ENCODE measurements at regions of chr3 and their contacts with region 1.

Region 1: DNA sequence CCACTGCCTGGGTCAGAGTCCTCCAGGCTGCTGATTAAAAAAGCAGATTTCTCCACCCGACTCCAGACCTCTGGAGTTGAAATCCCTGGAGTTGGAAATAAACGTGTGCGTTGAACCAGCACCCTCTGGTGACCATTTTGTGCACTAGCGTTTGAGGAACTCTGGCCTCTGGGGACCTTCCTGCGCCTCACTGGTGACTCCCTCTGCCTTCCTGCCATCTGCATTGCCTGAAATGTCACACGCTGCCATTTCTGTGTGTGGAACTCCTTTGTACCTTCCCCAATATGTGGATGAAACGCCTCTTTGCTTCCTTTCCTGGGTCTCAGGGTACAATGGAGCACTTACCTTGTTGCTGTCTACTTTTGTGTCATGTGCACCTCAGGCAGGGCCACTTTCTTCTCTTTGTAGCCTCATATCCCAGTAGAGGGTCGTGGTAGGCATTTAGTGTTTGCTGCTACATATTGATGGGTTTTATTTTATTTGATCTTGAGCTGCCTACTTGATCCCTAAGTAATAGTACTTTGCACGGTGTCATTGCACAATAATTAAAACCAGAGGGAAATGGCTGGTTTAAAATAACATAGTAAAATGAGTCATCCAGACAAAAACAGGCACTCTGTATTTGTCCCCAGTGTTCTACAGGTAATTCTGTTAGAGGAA is 56.8 kb downstream of the GPR171 start:
- DNase-seq: peak; percentile 43 to 74 (median 52)
- ATAC-seq: peak; percentile 97
- H3K4me3 ChIP-seq: no peak overlapping the region
- H3K27ac ChIP-seq: no peak overlapping the region
- H3K4me1 ChIP-seq: no peaks in the 10 kb centered on the region
- H3K27me3 ChIP-seq: peaks cover 11 to 14% of the 10 kb centered on the region in 2 experiments; a peak in 4 of 5 replicates
- CTCF ChIP-seq: peak; percentile 85 to 90 (median 89)
- EP300 ChIP-seq: no peak
- POLR2A ChIP-seq: no peak
- RAD21 ChIP-seq: peak; percentile 85 to 91

Region 2: DNA sequence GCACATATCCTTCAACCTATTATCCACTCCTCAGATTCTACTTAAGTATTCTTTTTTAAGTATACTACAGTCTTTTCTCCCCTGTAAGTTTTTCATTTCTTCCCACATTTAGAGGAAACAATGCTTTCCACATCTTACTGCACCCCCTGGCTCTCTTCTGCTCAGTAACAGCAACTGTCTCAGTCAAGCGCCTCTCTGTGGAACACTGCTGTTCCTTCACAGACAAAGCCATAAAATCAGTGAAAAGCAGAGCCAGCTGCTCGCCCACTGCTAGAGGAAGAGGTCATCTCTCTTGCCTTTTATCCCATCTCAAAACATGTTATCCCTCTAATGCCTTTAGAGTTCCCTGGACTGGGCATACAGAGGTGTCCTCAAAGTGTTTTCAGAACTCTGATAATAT is 624.7 kb before region 1 on chr3:
- CTCF ChIA-PET with region 1: no interaction called
- POLR2A ChIA-PET with region 1: no interaction called
- in situ Hi-C with region 1: loop called (anchors 25 kb)
- intact Hi-C with region 1: loop called (anchors 5 kb)
- DNase-seq: peak in 1 of 4 experiments; percentile 16
- ATAC-seq: peak; percentile 82
- H3K4me3 ChIP-seq: no peak overlapping the region
- H3K27ac ChIP-seq: no peak overlapping the region
- H3K4me1 ChIP-seq: peaks cover 0 to 4% of the 10 kb centered on the region in 2 experiments; a peak in 1 of 5 replicates
- H3K27me3 ChIP-seq: no peaks in the 10 kb centered on the region
- CTCF ChIP-seq: peak in 2 of 3 experiments; percentile 28 to 63; a peak in 4 of 6 replicates
- EP300 ChIP-seq: no peak
- POLR2A ChIP-seq: no peak
- RAD21 ChIP-seq: peak in 1 of 2 experiments; percentile 36; a peak in 1 of 4 replicates

Region 3: DNA sequence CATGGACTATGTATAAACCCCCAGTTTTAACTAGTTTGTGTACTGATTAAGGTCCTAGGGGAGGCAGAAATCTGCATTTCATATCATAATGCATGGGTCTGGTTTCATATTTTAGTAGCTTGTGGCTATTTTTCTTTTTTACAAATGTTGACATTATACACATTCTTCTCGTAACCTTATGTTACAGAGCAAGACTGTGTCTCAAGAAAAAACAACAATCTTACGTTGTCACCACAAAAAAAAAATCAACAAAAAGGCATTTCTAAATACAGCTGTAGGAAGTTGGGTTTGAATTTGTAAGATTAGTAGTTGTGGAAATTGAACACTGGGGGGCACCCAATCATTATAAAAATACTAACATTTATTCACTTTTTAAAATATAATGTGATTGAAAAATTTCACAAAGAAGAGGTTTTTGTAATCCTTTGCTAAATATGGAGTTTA is 617.8 kb before region 1 on chr3:
- CTCF ChIA-PET with region 1: interaction called, 5 read pairs
- POLR2A ChIA-PET with region 1: no interaction called
- in situ Hi-C with region 1: loop called (anchors 25 kb)
- intact Hi-C with region 1: loop called (anchors 5 kb)
- DNase-seq: peak in 2 of 4 experiments; percentile 22 to 28
- ATAC-seq: peak; percentile 69
- H3K4me3 ChIP-seq: no peak overlapping the region
- H3K27ac ChIP-seq: no peak overlapping the region
- H3K4me1 ChIP-seq: no peaks in the 10 kb centered on the region
- H3K27me3 ChIP-seq: no peaks in the 10 kb centered on the region
- CTCF ChIP-seq: peak in 2 of 3 experiments; percentile 19 to 57; a peak in 3 of 6 replicates
- EP300 ChIP-seq: no peak
- POLR2A ChIP-seq: no peak
- RAD21 ChIP-seq: peak; percentile 39 to 62; a peak in 3 of 4 replicates

Region 4: GRCh38 chr3:150925751-150926201 is 220.4 kb before region 1 on chr3:
- CTCF ChIA-PET with region 1: interaction called, 3 read pairs
- POLR2A ChIA-PET with region 1: no interaction called
- in situ Hi-C with region 1: no loop called
- intact Hi-C with region 1: loop called (anchors 1 kb)
- DNase-seq: peak; percentile 64 to 76 (median 72)
- ATAC-seq: peak; percentile 97
- H3K4me3 ChIP-seq: no peak overlapping the region
- H3K27ac ChIP-seq: no peak overlapping the region
- H3K4me1 ChIP-seq: peaks cover 0 to 3% of the 10 kb centered on the region in 2 experiments; a peak in 1 of 5 replicates
- H3K27me3 ChIP-seq: peaks cover 0 to 27% of the 10 kb centered on the region in 2 experiments; a peak in 3 of 5 replicates
- CTCF ChIP-seq: peak; percentile 73 to 87 (median 79)
- EP300 ChIP-seq: no peak
- POLR2A ChIP-seq: no peak
- RAD21 ChIP-seq: peak; percentile 68 to 79

Region 5: DNA sequence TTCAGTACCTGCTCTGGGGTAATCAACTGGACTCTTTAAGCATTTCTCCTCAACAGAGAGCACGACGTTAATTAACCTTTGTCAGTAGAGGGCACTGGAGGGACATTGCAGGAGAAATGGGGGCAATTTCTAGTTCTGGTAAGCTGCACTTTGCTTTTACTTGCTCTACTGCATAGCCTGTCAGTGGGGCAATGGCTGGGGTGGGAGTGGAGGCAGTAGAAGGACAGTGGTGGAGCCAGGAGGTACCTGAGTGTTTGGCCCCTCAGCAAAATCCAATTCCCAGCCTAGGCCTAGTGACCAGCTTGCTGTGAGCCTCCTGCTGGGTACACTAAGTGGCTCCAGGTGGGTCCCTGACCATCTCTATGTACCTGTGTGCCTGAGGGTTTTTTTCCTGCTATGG is 79.0 kb before region 1 on chr3:
- CTCF ChIA-PET with region 1: no interaction called
- POLR2A ChIA-PET with region 1: interaction called, 3 read pairs
- in situ Hi-C with region 1: no loop called
- intact Hi-C with region 1: loop called (anchors 1 kb)
- DNase-seq: peak in 1 of 4 experiments; percentile 24
- ATAC-seq: peak; percentile 77
- H3K4me3 ChIP-seq: no peak overlapping the region
- H3K27ac ChIP-seq: no peak overlapping the region
- H3K4me1 ChIP-seq: no peaks in the 10 kb centered on the region
- H3K27me3 ChIP-seq: no peaks in the 10 kb centered on the region
- CTCF ChIP-seq: peak; percentile 35 to 56 (median 54)
- EP300 ChIP-seq: no peak
- POLR2A ChIP-seq: no peak
- RAD21 ChIP-seq: peak; percentile 12 to 54; a peak in 2 of 4 replicates